Tibial artery (tissue), 4 donors: ENCODE measurements at regions of chr6 and their contacts with region 1.

Region 1: GRCh38 chr6:41424370-41425058 is 89.1 kb downstream of the NCR2 start:
- DNase-seq: peak; percentile 88 to 92
- H3K4me3 ChIP-seq: no peak overlapping the region
- H3K27ac ChIP-seq: no peak overlapping the region
- H3K4me1 ChIP-seq: peaks cover 0 to 39% (median 33%) of the 10 kb centered on the region in 4 donors
- H3K27me3 ChIP-seq: no peaks in the 10 kb centered on the region
- CTCF ChIP-seq: peak; percentile 83 to 88

Region 2: GRCh38 chr6:41470331-41471063 is 46.0 kb after region 1 on chr6:
- intact Hi-C with region 1: loop called (anchors 5 kb)
- DNase-seq: peak; percentile 77 to 94
- H3K4me3 ChIP-seq: peak overlapping the region; percentile 6 to 41
- H3K27ac ChIP-seq: peak overlapping the region; percentile 58 to 69
- H3K4me1 ChIP-seq: peaks cover 3 to 39% (median 20%) of the 10 kb centered on the region in 4 donors
- H3K27me3 ChIP-seq: peaks cover 0 to 2% of the 10 kb centered on the region in 2 donors
- CTCF ChIP-seq: no peak

Region 3: DNA sequence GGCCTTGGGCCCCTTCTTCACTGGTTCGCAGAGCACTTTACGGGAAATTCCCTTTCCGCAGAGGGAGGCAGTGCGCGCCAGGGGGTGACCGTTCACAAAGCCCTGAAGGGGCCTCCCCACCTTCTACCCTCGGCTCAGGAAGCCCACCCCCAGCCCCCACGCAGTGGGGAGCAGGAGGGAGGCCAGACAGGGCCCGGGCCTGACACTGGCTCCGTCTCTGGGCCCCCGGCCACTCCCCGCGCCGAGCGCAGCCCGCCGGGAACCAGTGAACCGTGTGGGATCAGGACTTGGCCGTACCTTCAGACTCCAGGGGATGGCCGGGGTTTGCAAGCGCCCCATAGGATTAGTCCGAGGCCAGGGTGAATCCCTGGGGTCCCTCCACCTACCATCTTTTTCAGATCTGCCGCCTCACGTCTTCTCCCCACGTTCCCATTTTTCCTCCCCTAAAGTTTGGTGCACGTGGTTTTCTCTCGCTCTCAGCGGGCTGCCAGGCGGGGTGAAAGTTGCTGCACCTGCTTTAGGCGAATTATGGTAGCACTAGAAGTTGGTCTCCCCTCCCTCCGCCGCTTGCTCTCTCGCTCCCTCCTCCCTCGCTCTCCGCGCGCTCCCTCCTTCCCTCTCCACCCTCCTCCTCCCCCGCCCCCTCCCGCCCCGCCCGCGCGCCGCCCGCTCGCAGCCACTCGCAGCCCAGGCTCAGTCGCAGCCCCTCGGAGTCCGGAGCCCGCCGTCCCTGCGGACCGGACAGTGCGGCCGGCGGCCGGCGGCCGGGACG is 121.4 kb after region 1 on chr6 and contains the start of gene FOXP4:
- intact Hi-C with region 1: loop called (anchors 5 kb)
- DNase-seq: peak; percentile 94 to 96
- H3K4me3 ChIP-seq: peak within 1 kb of the TSS; percentile 97 to 98
- H3K27ac ChIP-seq: peak within 1 kb of the TSS; percentile 88 to 90
- H3K4me1 ChIP-seq: peaks cover 7 to 46% (median 34%) of the 10 kb centered on the region in 4 donors
- H3K27me3 ChIP-seq: no peaks in the 10 kb centered on the region
- CTCF ChIP-seq: no peak